Posterior vena cava (tissue), 2 donors: ENCODE measurements at regions of chr5 and their contacts with region 1.

Region 1: DNA sequence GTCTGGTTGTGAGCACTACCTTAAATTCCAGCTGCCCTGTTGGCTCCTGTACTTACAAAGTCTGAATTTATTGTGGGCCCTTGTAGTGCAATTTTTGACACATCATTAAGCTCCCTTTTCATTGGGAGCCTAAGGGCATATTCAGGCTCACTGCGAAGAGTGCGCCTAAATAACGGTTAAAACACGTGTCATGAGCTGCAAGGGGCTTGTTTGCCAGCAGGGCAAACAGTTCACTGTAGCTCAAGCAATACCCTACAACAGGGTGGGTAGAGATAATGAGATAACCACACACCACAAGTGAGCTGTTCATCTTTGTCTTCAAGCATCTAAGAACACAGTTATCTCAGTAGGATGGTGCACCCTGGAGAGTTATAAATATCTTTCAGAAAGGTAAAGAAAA is 214.2 kb downstream of the SLF1 start:
- DNase-seq: no peak

Region 2: DNA sequence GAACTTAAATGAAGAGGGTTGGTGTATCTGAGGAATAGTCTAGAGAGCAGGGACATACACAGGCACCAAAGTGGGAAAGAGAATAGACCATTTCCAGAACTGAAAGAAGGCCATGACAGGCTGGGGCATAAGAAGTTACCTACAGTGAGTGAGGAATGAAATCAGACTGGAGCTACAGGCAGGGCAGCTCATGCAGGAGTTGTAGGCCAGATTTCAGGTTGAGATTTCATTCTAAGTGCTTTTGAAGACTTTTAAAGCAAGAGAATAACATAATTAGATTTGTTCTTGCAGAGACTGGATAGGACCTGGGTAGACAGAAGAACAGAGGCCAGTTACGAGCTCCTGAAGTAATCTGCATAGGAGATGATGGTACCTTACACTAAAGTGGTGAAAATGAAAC is 495.1 kb before region 1 on chr5:
- intact Hi-C with region 1: no loop called
- DNase-seq: no peak

Region 3: DNA sequence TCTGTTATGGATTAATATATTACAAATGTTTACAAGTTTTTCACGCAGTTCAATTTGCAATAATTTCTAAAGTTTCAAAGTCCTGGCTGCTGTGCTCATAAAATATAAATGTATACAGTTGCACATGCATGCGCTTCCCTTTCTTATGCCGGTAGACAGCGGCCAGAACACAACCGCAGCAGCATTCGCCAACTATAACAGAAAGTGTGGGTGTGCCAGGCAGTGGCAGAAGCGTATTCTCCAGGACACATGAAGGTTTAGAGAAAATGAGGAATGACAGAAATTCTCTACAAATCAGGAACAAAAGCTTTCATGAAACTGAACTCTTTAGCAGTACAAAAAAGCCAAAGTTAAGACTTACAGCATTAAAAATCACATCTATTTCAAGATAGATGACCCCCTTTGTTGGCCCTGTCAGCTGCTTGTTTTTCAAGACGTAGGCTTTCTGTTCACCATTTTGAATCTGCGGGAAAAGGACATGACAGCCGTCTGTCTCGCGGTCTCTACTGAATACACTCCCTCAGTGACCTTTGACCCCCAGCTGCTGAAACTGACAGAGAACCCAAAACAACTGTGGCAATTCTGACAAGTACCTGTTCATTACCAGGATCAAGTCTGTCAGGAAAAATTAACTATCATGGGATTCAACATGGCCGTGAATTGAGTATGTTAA is 38.0 kb after region 1 on chr5:
- intact Hi-C with region 1: loop called in 1 of 2 experiments (anchors 2 kb)
- DNase-seq: no peak

Region 4: GRCh38 chr5:95035891-95036685 is 203.4 kb after region 1 on chr5:
- intact Hi-C with region 1: no loop called
- DNase-seq: no peak